ENCODE measurements at regions of chr4 and their contacts with region 1.

Region 1: GRCh38 chr4:145920205-145920604 is 18.4 kb downstream of the ZNF827 start:
- DNase-seq: no peak
- H3K4me3 Mint-ChIP-seq: no peak overlapping the region
- H3K27ac Mint-ChIP-seq: no peak overlapping the region
- H3K4me1 Mint-ChIP-seq: peaks cover 24% of the 10 kb centered on the region
- H3K27me3 Mint-ChIP-seq: no peaks in the 10 kb centered on the region

Region 2: DNA sequence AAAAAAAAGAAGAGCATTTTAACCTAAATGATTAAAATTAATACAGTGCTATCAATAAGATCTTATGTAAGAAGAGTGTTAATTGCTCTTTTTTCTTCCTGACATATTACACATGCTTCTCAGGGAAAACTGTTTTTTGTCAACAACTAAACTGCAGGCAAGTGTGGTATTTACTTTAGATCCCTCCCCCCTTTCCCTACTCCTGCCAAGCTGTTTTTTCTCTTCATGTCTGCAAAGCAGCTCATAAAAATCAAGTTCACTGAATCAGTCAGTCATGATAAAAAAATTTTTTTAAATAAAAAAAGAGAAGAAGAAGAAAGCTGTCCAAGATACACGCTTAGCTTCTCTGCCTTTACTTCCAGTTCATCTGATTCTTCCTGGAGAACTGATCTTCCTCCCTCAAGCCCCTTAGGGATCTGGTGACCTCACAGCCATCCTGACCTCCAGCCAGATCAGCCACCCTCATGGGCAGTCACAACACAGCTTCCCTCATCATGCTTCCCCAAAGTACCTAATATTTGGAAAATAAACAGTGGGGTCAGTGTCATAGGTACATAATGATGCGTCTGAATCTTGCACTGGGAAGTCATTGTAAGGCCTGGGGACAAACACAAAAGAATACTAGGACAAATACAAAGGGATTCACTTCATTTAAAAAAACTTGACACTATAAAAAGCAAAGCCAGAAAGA is 68.5 kb before region 1 on chr4:
- CTCF ChIA-PET with region 1: no interaction called
- POLR2A ChIA-PET with region 1: no interaction called
- intact Hi-C with region 1: no loop called
- DNase-seq: no peak
- H3K4me3 Mint-ChIP-seq: no peak overlapping the region
- H3K27ac Mint-ChIP-seq: no peak overlapping the region
- H3K4me1 Mint-ChIP-seq: no peaks in the 10 kb centered on the region
- H3K27me3 Mint-ChIP-seq: no peaks in the 10 kb centered on the region

Region 3: DNA sequence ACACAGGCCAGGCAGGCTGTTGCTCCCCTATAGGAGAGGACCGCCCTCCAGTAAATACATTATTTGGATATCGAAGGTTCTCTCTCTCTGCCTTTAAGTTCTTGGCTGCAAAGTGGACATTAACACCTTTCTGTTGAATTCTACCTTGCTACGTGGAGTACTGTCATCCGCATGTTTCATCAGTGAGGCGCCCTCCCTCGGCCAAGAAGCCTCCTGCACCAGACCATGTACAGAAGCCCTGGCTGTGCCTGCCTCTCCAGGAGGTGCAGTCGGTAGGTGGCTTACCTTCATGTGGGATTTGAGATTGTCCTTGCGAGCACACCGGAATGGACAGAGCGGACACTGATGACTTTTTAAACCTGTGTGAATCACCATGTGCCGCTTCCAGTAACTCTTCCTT is 28.2 kb before region 1 on chr4:
- CTCF ChIA-PET with region 1: no interaction called
- POLR2A ChIA-PET with region 1: no interaction called
- intact Hi-C with region 1: loop called (anchors 1 kb)
- DNase-seq: no peak
- H3K4me3 Mint-ChIP-seq: no peak overlapping the region
- H3K27ac Mint-ChIP-seq: no peak overlapping the region
- H3K4me1 Mint-ChIP-seq: peaks cover 30% of the 10 kb centered on the region
- H3K27me3 Mint-ChIP-seq: no peaks in the 10 kb centered on the region

Measured in activated CD4-positive, alpha-beta memory T cell treated with anti-CD3 and anti-CD28 coated beads for 36 hours (primary cell).